ENCODE measurements at regions of chr7 and their contacts with region 1.

Region 1: GRCh38 chr7:103369430-103369829 is 22.0 kb downstream of the PSMC2 start:
- DNase-seq: no peak
- ATAC-seq: no peak
- H3K4me3 ChIP-seq: no peak overlapping the region
- H3K27ac ChIP-seq: no peak overlapping the region
- H3K4me1 ChIP-seq: no peaks in the 10 kb centered on the region
- H3K27me3 ChIP-seq: no peaks in the 10 kb centered on the region; the same call in 1 of the 2 replicates
- CTCF ChIP-seq: no peak
- POLR2A ChIP-seq: no peak
- RAD21 ChIP-seq: no peak

Region 2: GRCh38 chr7:103314852-103315251 is 54.6 kb before region 1 on chr7:
- CTCF ChIA-PET with region 1: no interaction called
- POLR2A ChIA-PET with region 1: no interaction called
- dilution Hi-C with region 1: no loop called
- in situ Hi-C with region 1: no loop called
- intact Hi-C with region 1: loop called (anchors 5 kb)
- DNase-seq: no peak
- ATAC-seq: no peak
- H3K4me3 ChIP-seq: no peak overlapping the region
- H3K27ac ChIP-seq: no peak overlapping the region
- H3K4me1 ChIP-seq: no peaks in the 10 kb centered on the region
- H3K27me3 ChIP-seq: no peaks in the 10 kb centered on the region
- CTCF ChIP-seq: no peak
- POLR2A ChIP-seq: no peak
- RAD21 ChIP-seq: no peak

Region 3: GRCh38 chr7:103660455-103661371 is 291.3 kb after region 1 on chr7:
- CTCF ChIA-PET with region 1: no interaction called
- POLR2A ChIA-PET with region 1: no interaction called
- dilution Hi-C with region 1: no loop called
- in situ Hi-C with region 1: no loop called
- intact Hi-C with region 1: no loop called
- DNase-seq: peak; percentile 75
- ATAC-seq: peak; percentile 60
- H3K4me3 ChIP-seq: no peak overlapping the region
- H3K27ac ChIP-seq: no peak overlapping the region; the same call in 1 of the 2 replicates
- H3K4me1 ChIP-seq: peaks cover 7% of the 10 kb centered on the region
- H3K27me3 ChIP-seq: no peaks in the 10 kb centered on the region
- CTCF ChIP-seq: no peak
- POLR2A ChIP-seq: no peak
- RAD21 ChIP-seq: no peak

Region 4: DNA sequence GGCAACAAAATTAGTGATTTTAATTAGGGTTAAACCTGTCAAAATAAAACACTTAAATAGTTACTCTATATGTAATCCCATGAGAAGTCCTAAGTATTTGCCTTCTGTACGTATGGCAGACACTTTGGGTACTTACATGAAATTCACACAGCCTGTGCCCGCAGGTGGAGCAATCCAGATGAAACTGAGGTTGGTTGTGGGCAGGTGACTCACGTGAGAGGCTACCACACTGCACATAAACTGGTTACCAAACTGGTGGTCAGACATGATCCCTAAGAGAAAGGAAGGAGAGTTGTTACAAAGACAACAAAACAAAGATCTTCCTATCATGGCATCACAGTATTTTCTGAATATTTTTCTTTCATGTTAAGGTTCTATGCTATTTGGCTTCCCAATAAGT is 464.0 kb after region 1 on chr7:
- CTCF ChIA-PET with region 1: no interaction called
- POLR2A ChIA-PET with region 1: no interaction called
- dilution Hi-C with region 1: no loop called
- in situ Hi-C with region 1: no loop called
- intact Hi-C with region 1: no loop called
- DNase-seq: no peak
- ATAC-seq: no peak
- H3K4me3 ChIP-seq: no peak overlapping the region
- H3K27ac ChIP-seq: no peak overlapping the region
- H3K4me1 ChIP-seq: no peaks in the 10 kb centered on the region
- H3K27me3 ChIP-seq: no peaks in the 10 kb centered on the region
- CTCF ChIP-seq: no peak
- POLR2A ChIP-seq: no peak
- RAD21 ChIP-seq: no peak

Region 5: GRCh38 chr7:103947026-103947655 is 577.7 kb after region 1 on chr7:
- CTCF ChIA-PET with region 1: no interaction called
- POLR2A ChIA-PET with region 1: no interaction called
- dilution Hi-C with region 1: no loop called
- in situ Hi-C with region 1: no loop called
- intact Hi-C with region 1: no loop called
- DNase-seq: peak; percentile 31
- ATAC-seq: no peak
- H3K4me3 ChIP-seq: no peak overlapping the region
- H3K27ac ChIP-seq: no peak overlapping the region
- H3K4me1 ChIP-seq: no peaks in the 10 kb centered on the region
- H3K27me3 ChIP-seq: no peaks in the 10 kb centered on the region
- CTCF ChIP-seq: no peak
- POLR2A ChIP-seq: no peak
- RAD21 ChIP-seq: no peak

Region 6: GRCh38 chr7:104156842-104157277 is 787.4 kb after region 1 on chr7:
- CTCF ChIA-PET with region 1: no interaction called
- POLR2A ChIA-PET with region 1: no interaction called
- dilution Hi-C with region 1: no loop called
- in situ Hi-C with region 1: no loop called
- intact Hi-C with region 1: no loop called
- DNase-seq: peak; percentile 57
- ATAC-seq: no peak
- H3K4me3 ChIP-seq: no peak overlapping the region
- H3K27ac ChIP-seq: no peak overlapping the region
- H3K4me1 ChIP-seq: no peaks in the 10 kb centered on the region
- H3K27me3 ChIP-seq: no peaks in the 10 kb centered on the region
- CTCF ChIP-seq: peak; percentile 70
- POLR2A ChIP-seq: no peak
- RAD21 ChIP-seq: peak; percentile 72

Measured in IMR-90 (cell line).